Sciatic nerve (tissue), 2 donors: ENCODE measurements at regions of chr6 and their contacts with region 1.

Region 1: GRCh38 chr6:110971468-110971867 is 10.4 kb upstream of the RPF2 start:
- DNase-seq: no peak
- ATAC-seq: peak; percentile 28

Region 2: DNA sequence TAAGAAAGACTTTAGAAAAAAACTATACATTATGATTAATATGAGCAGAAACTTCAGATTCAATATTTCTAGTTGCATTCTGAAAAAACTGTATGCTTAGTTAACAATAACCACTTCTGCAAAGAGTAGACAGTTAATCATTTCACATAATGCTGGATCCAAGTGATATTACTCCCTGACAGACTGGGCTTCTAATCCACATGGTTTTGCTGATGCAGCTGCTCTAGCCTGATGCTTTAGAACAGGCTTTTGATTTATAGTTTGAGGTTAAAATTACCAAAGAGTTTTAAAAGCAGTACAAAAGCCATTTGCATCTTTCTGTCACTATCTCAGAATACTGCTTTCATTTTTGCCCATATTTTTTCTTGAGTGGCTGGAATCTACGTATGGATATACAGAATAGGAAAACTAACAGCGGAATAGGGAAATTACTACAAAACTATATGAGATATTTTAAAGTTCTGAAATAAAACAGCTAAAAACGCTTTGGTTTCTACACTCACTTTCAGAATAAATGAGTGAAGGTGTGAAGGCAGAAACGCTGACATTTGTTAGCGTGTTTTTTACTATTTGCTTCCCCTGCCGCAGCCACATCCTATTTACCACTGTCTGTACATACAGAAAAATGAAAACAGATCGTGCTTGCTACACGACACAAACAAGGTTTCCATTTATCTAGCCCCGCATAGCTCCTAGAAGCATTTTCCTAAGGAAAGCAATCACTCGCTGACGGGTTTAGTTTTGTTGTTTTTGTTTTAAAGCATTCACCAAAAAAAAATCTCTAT is 675.0 kb before region 1 on chr6:
- intact Hi-C with region 1: loop called (anchors 10 kb)
- DNase-seq: no peak
- ATAC-seq: no peak

Region 3: GRCh38 chr6:110938171-110938570 is 33.3 kb before region 1 on chr6:
- intact Hi-C with region 1: no loop called
- DNase-seq: no peak
- ATAC-seq: no peak